SK-N-SH (cell line): ENCODE measurements at regions of chr3 and their contacts with region 1.

Region 1: GRCh38 chr3:51995346-51996163 is at the start of gene RPL29:
- DNase-seq: peak; percentile 92
- H3K4me3 ChIP-seq: peak within 1 kb of the TSS; percentile 83 to 88
- H3K27ac ChIP-seq: peak within 1 kb of the TSS; percentile 83 to 88
- H3K4me1 ChIP-seq: peaks cover 9 to 24% of the 10 kb centered on the region in 2 experiments; a peak in 3 of 4 replicates
- H3K27me3 ChIP-seq: no peaks in the 10 kb centered on the region
- CTCF ChIP-seq: 0 out of 2 replicates have a peak, but pooled peaks have one; percentile 19
- EP300 ChIP-seq: peak in 1 of 2 experiments; percentile 55; a peak in 1 of 4 replicates
- RAD21 ChIP-seq: peak; percentile 11; the same call in 1 of the 2 replicates
- polyA plus RNA-seq, gene RPL29: 3,173 and 3,642 TPM in 2 replicates

Region 2: GRCh38 chr3:51941798-51942602 is 53.6 kb before region 1 on chr3 and contains the starts of genes PARP3 and RRP9:
- CTCF ChIA-PET with region 1: interaction called, 17 read pairs
- POLR2A ChIA-PET with region 1: interaction called, 14 read pairs
- DNase-seq: peak; percentile 99
- H3K4me3 ChIP-seq: peak within 1 kb of the TSS; percentile 85 to 95
- H3K27ac ChIP-seq: peak within 1 kb of the TSS; percentile 85 to 97
- H3K4me1 ChIP-seq: peaks cover 11 to 18% of the 10 kb centered on the region in 2 experiments; a peak in 3 of 4 replicates
- H3K27me3 ChIP-seq: no peaks in the 10 kb centered on the region
- CTCF ChIP-seq: peak; percentile 98
- EP300 ChIP-seq: no peak; a peak in 1 of 4 replicates
- RAD21 ChIP-seq: peak; percentile 98
- polyA plus RNA-seq, gene PARP3: 31.1 and 35.2 TPM in 2 replicates
- polyA plus RNA-seq, gene RRP9: 49.6 and 52.0 TPM in 2 replicates

Region 3: DNA sequence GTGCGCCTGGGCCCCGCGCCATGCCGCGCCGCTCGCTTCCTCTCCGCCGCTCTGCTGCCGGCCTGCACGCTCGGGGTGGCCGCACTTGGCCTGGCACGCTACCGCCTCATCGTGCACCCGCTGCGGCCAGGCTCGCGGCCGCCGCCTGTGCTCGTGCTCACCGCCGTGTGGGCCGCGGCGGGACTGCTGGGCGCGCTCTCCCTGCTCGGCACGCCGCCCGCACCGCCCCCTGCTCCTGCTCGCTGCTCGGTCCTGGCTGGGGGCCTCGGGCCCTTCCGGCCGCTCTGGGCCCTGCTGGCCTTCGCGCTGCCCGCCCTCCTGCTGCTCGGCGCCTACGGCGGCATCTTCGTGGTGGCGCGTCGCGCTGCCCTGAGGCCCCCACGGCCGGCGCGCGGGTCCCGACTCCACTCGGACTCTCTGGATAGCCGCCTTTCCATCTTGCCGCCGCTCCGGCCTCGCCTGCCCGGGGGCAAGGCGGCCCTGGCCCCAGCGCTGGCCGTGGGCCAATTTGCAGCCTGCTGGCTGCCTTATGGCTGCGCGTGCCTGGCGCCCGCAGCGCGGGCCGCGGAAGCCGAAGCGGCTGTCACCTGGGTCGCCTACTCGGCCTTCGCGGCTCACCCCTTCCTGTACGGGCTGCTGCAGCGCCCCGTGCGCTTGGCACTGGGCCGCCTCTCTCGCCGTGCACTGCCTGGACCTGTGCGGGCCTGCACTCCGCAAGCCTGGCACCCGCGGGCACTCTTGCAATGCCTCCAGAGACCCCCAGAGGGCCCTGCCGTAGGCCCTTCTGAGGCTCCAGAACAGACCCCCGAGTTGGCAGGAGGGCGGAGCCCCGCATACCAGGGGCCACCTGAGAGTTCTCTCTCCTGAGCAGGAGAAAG is 39.4 kb before region 1 on chr3:
- CTCF ChIA-PET with region 1: interaction called, 10 read pairs
- POLR2A ChIA-PET with region 1: interaction called, 4 read pairs
- DNase-seq: peak; percentile 91
- H3K4me3 ChIP-seq: no peak overlapping the region; a peak in 1 of 4 replicates
- H3K27ac ChIP-seq: peak overlapping the region in 1 of 2 experiments; percentile 53; a peak in 2 of 4 replicates
- H3K4me1 ChIP-seq: peaks cover 4 to 12% of the 10 kb centered on the region in 2 experiments; a peak in 2 of 4 replicates
- H3K27me3 ChIP-seq: no peaks in the 10 kb centered on the region
- CTCF ChIP-seq: peak; percentile 47
- EP300 ChIP-seq: no peak
- RAD21 ChIP-seq: no peak

Region 4: DNA sequence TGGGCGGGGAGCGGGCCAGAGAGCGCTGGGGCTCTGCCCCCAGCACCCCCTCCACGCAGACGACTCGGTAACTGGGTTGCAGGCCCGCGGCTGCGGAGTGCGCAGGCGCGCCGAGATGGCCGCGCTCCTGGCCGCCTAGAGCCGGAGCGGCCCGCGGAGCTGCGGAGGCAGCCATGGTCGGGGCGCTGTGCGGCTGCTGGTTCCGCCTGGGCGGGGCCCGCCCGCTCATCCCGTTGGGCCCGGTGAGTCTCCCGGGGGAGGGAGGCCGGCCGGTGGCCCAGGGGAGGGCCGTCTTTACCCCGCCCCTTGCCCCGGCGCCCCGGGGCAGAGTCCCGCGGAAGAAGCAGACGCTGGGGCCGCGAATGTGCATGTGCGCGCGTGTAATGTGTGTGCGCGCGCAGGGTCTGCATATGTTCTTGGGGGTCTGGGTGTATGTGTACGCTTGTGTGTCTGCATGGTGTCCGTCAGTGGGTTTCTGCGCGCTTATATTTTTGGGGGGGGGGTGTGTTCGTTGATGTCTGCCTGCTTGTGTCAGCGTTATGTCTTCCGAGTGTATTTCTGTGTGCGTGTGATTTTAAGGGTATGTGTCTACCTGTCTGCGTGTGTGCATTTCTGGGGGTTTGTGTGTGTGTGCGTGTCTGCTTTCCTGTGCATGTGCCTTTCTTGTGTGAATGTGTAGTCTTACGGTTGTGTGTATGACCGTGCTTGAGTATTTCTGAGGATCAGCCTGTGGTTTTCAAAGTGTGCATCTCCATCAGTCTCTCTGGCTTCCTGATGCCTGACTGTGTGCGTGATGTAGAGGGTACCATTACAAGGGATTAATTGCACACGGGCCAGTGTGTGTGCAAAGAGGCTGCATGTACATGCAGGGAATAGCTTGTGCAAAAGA is 20.3 kb before region 1 on chr3 and contains the start of gene ABHD14A:
- CTCF ChIA-PET with region 1: interaction called, 23 read pairs
- POLR2A ChIA-PET with region 1: interaction called, 20 read pairs
- DNase-seq: peak; percentile 92
- H3K4me3 ChIP-seq: peak within 1 kb of the TSS; percentile 53 to 85
- H3K27ac ChIP-seq: peak within 1 kb of the TSS; percentile 63 to 90; a peak in 3 of 4 replicates
- H3K4me1 ChIP-seq: peaks cover 7 to 31% of the 10 kb centered on the region in 2 experiments
- H3K27me3 ChIP-seq: no peaks in the 10 kb centered on the region
- CTCF ChIP-seq: no peak
- EP300 ChIP-seq: no peak
- RAD21 ChIP-seq: no peak
- polyA plus RNA-seq, gene ABHD14A: 22.1 and 31.5 TPM in 2 replicates

Region 5: DNA sequence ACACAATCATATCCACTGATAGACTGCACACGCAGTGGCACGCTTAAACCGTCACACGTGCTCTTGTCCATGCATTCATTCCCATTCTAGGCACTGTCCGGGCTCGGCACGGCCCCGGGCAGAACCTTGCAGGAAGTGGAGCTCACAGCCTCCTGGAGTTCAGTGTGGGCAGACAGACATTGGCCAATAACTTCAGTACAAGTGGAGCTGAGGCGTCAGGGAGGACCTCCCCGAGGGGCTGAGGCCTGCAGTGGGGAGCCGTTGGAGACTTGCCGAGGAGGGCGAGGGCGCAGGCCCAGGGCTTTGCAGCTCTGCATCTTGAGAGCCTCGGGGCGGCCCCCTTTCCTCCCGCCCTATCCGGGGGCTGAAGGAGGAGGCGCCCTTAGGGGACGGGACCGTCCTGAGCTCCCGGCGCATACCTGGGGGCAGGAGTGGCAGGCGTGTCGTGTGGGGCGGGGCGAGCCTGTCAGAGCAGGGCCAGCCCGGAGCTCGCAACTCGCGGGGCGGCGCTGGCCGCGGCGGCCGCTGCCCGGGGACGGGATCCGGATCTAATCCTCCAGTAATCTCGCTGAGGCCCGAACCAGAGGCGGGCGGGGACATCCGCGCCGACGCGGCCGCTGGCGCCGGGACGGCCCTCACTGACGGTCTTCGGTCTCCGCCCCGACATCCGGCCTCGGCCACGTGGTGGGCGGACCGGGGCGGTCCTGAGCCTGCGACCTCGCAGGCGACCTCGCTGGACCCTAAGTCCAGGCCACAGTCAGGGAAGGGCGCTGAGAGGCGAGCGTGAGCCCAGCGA is 12.6 kb before region 1 on chr3 and contains the start of gene ACY1:
- CTCF ChIA-PET with region 1: interaction called, 18 read pairs
- POLR2A ChIA-PET with region 1: interaction called, 42 read pairs
- DNase-seq: peak; percentile 97
- H3K4me3 ChIP-seq: peak within 1 kb of the TSS; percentile 68 to 90
- H3K27ac ChIP-seq: peak within 1 kb of the TSS; percentile 89 to 93
- H3K4me1 ChIP-seq: peaks cover 5 to 19% of the 10 kb centered on the region in 2 experiments; a peak in 3 of 4 replicates
- H3K27me3 ChIP-seq: no peaks in the 10 kb centered on the region
- CTCF ChIP-seq: peak; percentile 4; the same call in 1 of the 2 replicates
- EP300 ChIP-seq: no peak
- RAD21 ChIP-seq: no peak
- polyA plus RNA-seq, gene ACY1: 93.0 and 96.2 TPM in 2 replicates

Region 6: DNA sequence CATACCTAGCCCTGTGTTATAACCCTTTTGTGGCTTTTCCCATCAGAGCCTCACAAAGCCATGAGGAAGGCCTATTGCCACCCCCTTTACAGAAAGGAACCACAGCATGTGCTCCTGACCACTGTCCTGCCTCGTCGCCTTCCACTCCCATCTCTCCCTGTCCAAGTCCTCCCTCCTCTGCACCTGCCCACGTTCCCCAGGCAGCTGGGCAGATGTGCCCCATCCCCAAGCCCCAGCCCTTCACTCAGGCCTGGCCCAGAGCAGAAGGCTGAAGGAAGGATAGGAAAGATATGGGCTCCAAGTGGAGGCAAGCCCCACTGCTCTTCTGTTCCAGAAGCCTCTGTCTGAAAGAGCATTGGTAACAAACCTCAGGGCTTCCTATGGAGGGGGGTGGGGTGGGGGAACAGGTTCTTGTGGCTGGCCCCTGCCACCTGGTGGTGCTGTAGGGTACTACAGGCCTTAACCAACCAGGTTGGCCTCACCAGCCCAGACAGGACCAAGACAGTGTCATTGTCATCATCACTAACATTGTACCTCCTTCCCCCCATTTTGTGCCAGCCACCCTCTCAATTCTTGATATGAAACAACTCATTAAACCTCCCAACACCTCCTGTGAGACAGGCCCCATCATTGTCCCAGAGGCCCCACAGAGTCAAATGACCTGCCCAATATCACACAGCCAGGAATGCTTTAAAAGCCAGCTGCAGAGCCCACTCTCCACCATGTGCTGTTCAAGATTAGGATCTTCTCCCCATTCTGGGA is 148.7 kb after region 1 on chr3:
- CTCF ChIA-PET with region 1: interaction called, 608 read pairs
- POLR2A ChIA-PET with region 1: interaction called, 3 read pairs
- DNase-seq: peak; percentile 92
- H3K4me3 ChIP-seq: peak overlapping the region in 1 of 2 experiments; percentile 9; a peak in 1 of 4 replicates
- H3K27ac ChIP-seq: peak overlapping the region in 1 of 2 experiments; percentile 77; a peak in 2 of 4 replicates
- H3K4me1 ChIP-seq: peaks cover 0 to 13% of the 10 kb centered on the region in 2 experiments; a peak in 1 of 4 replicates
- H3K27me3 ChIP-seq: no peaks in the 10 kb centered on the region
- CTCF ChIP-seq: peak; percentile 89
- EP300 ChIP-seq: no peak
- RAD21 ChIP-seq: peak; percentile 95

Region 7: DNA sequence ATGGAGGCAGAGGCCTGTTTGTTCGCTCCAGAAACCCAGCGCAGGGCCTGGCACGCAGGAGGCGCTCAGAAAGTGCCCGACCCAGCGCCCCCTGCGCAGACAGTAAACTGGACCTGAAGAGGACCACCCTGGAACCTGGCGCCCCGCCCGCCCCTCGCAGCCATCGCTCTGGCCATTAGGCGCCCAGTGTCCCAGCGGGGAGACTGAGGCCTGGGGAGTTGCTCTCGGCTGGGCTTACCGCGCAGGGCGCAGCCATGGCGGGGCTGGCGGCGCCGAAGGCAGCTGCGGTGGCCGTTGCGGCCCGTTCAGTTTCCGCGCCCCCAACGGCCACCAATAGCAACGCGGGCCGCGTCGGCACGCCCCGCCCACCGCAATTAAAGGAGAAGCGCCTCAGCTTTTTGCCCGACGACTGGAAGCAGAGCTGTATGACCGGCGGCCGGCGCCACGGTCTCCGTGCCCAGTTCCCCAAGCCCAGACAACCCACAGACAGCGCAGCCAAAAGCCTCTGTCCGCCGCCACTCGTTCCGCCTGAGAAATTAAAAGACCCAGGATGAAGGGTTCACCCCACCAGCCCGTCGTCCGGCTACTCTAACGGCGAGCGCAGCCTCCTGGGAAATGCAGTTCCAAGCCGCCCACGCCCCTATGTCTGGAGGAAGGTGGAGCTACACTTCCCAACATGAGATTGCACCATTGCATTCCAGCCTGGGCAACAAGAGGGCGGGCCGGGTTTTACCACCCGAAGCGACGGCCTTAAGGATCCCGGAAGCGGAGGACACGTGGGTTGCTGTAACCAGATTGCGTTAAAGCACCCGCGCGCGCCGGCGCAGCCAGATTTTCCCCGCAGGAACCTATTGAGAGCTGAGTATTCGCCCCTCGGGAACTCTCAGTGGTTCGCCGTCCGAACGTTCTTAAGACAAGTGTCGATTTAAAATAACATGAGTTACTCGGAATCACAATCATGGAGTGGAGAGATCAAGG is 158.9 kb after region 1 on chr3 and contains the start of gene POC1A:
- CTCF ChIA-PET with region 1: interaction called, 608 read pairs
- POLR2A ChIA-PET with region 1: interaction called, 14 read pairs
- DNase-seq: peak; percentile 93
- H3K4me3 ChIP-seq: peak within 1 kb of the TSS; percentile 76 to 84
- H3K27ac ChIP-seq: peak within 1 kb of the TSS; percentile 81 to 95
- H3K4me1 ChIP-seq: peaks cover 5 to 14% of the 10 kb centered on the region in 2 experiments; a peak in 3 of 4 replicates
- H3K27me3 ChIP-seq: no peaks in the 10 kb centered on the region
- CTCF ChIP-seq: no peak
- EP300 ChIP-seq: no peak
- RAD21 ChIP-seq: no peak
- polyA plus RNA-seq, gene POC1A: 9.6 and 11.7 TPM in 2 replicates